GM18951 (cell line): ENCODE measurements at regions of chr7 and their contacts with region 1.

Region 1: DNA sequence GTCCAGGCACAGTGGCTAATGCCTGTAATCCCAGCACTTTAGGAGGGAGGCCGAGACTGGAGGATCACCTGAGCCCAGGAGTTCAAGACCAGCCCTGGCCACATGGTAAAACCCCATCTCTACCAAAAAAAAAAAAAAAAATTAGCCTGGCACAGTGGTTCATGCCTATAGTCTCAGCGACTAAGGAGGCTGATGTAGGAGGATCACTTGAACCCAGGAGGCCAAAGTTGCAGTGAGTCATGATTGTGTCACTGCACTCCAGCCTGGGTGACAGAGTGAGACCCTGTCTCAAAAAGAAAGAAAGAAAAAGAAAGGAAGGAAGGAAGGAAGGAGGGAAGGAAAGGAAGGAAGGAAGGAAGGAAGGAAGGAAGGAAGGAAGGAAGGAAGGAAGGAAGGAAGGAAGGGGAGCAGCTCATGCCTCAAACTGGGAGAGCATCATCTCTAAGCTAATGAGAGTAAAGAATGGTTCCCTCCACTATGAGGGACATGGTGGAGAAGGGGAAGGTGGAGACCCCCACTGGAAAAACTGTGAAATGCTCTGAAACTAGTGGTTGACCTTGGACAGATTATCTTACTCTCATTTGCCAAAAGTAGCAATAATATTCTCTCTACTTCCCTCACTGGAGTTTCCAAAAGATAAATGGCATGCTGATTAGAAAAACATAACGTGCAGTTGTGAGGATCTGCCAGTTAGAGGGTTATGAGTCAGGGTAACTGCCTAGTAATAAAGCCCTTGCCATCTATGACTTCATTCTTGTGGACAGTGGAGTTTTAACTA is 16.8 kb downstream of the GIMAP5 start:
- POLR2A ChIP-seq: no peak

Region 2: GRCh38 chr7:150435390-150436073 is 318.5 kb before region 1 on chr7:
- in situ Hi-C with region 1: loop called (anchors 10 kb)
- POLR2A ChIP-seq: peak; percentile 53

Region 3: DNA sequence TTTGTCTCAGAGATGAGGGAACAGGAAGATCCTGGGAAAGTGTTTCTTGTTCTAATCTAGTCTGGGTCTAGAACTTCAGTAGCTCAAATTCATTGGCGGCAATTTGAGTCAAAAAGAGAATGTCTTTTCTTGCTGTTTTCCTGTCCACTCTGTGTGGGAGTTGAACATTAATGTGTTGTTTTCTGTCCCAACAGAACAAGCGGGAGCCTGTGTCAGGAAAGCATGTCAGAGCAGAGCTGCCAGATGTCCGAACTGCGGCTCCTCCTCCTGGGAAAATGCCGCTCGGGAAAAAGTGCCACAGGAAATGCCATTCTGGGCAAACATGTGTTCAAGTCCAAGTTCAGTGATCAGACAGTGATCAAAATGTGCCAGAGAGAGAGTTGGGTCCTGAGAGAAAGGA is 287.5 kb before region 1 on chr7:
- in situ Hi-C with region 1: loop called (anchors 10 kb)
- POLR2A ChIP-seq: no peak

Region 4: DNA sequence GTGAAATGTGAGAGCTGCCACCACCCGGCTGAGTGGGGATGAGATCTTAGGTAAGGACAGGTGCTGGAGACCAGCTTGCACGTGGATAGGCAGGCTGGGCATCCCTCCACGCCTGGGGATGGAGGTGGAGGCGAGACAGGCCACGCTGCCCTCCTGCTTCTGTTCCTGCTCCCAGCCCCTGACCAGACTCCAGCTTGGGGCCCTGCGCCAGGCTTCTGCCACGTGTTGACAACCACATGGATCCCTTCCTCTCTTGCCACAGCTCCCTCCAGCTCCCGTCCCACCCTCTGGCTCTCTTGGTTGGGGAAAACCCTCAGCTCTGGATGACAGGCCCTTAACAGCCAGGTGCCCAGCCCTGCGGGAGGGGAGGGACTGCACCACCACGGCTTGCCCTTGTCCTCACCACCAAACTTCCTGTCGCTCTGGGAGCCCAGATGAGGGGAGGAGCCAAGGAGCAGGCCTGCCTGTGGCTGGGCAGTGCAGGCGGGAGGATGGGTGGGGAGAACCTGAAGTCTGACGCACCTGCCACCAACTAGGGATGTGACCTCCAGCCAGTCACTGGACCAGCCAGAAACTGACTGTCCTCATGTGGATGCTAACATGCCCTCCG is 188.1 kb after region 1 on chr7:
- in situ Hi-C with region 1: no loop called
- POLR2A ChIP-seq: no peak